Heart right ventricle (tissue), 16 donors: ENCODE measurements at regions of chr5 and their contacts with region 1.

Region 1: DNA sequence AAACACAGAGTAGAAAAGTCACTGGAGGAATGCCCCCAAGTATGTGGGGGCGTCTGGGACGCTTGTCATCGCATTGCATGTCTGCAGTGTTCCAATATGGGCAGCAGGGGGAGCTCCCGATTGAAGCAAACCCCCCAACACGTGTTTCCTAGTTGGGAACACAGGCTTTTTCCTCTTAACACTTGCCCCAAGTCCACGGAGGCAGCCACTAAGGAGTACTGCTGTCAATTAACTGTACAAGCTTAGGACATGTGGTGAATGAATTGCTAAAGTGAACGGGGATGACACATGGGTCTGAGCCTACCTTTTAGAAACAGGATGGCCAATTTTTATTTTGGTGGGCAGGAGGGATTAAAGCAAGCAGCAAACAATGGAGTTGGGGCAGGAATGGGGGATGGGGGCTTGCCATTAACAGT is 2.2 kb downstream of the GABRB2 start:
- DNase-seq: no peak
- ATAC-seq: peak in 1 of 8 donors; percentile 41
- H3K4me3 ChIP-seq: no peak overlapping the region
- H3K27ac ChIP-seq: no peak overlapping the region
- H3K4me1 ChIP-seq: peaks cover 0 to 27% (median 16%) of the 10 kb centered on the region in 9 donors
- H3K27me3 ChIP-seq: peaks cover 4 to 78% (median 54%) of the 10 kb centered on the region in 7 donors
- CTCF ChIP-seq: peak in 8 of 9 donors; percentile 32 to 78 (median 64)

Region 2: GRCh38 chr5:163347671-163348070 is 1803.3 kb after region 1 on chr5:
- intact Hi-C with region 1: loop called in 2 of 10 experiments (anchors 10 kb)
- DNase-seq: peak in 1 of 2 donors; percentile 35
- ATAC-seq: no peak
- H3K4me3 ChIP-seq: no peak overlapping the region
- H3K27ac ChIP-seq: no peak overlapping the region
- H3K4me1 ChIP-seq: no peaks in the 10 kb centered on the region
- H3K27me3 ChIP-seq: peaks cover 0 to 4% (median 0%) of the 10 kb centered on the region in 7 donors
- CTCF ChIP-seq: peak; percentile 48 to 81 (median 79)

Region 3: DNA sequence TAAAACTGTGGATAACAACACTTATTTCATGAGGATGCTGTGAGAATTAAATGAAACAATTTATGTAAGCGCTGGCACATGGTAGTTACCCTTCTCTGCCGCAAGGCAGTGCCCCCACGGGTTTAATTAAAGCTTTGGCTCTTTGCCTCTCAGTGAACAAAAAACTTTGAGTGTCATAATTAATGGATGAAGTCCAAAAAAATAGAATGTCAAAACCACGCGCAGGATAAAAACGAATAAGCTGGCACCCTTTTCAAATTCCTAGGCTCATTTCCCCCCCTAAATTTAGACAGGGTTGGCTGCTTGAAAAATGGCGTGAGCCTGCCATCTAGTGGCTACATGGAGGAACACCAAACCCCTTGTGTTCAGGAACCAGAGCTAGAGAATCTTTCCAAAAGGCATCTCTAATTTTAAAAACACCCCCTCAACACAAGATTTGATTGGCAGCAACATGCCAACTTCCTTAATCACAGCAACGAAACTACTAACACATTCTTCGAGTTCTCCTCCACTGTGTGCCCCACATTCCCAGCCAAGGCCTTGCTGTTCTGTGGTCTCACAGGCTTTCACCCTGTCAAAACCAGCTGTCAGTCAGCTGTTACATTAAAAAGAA is 1864.1 kb after region 1 on chr5:
- intact Hi-C with region 1: loop called in 2 of 10 experiments (anchors 10 kb)
- DNase-seq: peak; percentile 20 to 49
- ATAC-seq: peak; percentile 81 to 96 (median 91)
- H3K4me3 ChIP-seq: peak overlapping the region in 2 of 10 donors; percentile 13 to 23
- H3K27ac ChIP-seq: no peak overlapping the region
- H3K4me1 ChIP-seq: peaks cover 0 to 21% (median 3%) of the 10 kb centered on the region in 9 donors
- H3K27me3 ChIP-seq: peaks cover 0 to 4% (median 0%) of the 10 kb centered on the region in 7 donors
- CTCF ChIP-seq: peak; percentile 71 to 93 (median 90)